Common myeloid progenitor, CD34-positive (primary cell): ENCODE measurements at regions of chr9 and their contacts with region 1.

Region 1: DNA sequence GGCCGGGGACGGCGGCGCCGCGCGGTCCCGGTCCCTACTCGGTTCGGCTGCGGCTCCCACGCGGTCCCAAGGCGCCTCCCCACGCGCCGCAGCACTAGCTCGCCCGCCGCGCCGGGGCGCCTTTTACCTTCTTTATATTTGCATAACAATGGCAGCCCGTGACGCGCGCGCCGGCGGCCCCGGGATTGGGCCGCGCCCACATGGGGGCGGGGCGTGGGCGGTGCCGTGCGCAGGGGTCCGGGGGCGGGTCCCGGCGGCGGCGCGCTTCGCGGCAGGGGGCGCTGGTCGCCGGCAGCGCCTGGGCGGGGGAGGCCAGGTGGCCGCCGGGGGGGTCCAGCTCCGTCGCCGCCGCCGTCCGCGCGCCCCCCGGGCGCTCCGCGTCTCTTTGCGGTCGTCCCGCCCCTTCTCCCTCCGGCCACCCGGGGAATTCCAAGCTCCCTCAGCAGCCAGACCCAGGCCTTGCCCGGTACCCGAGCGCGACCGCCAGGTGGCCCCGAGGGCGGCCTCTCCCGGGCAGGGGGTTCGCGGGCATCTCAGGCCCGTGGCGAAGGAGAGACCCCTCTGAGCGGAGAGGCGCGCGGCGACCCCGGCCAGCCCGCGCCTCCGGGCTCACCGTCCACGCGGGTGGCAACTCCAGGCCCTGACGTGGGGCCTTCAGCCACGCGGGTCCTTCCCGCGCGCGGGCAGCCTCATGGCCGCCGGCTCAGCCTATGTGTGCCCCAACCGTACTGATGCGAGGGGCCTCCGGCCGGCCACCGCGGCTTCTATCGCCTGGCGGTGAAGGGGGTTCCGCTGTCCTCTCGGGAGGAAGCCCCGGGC is at the start of gene NRARP:
- DNase-seq: peak; percentile 83 to 90 (median 89)
- H3K4me3 ChIP-seq: peak within 1 kb of the TSS; percentile 45 to 83 (median 66)
- H3K27ac ChIP-seq: peak within 1 kb of the TSS in 1 of 2 experiments; percentile 25
- H3K4me1 ChIP-seq: peaks cover 5 to 69% (median 66%) of the 10 kb centered on the region in 4 experiments
- H3K27me3 ChIP-seq: peaks cover 0 to 8% (median 2%) of the 10 kb centered on the region in 5 experiments

Region 2: GRCh38 chr9:137316012-137316976 is 13.9 kb after region 1 on chr9:
- CTCF ChIA-PET with region 1: interaction called, 56 read pairs
- POLR2A ChIA-PET with region 1: interaction called, 6 read pairs
- DNase-seq: peak in 2 of 3 donors; percentile 41 to 46
- H3K4me3 ChIP-seq: peak overlapping the region in 5 of 7 experiments; percentile 15 to 64 (median 36)
- H3K27ac ChIP-seq: no peak overlapping the region
- H3K4me1 ChIP-seq: peaks cover 0 to 45% (median 39%) of the 10 kb centered on the region in 4 experiments
- H3K27me3 ChIP-seq: no peaks in the 10 kb centered on the region

Region 3: GRCh38 chr9:137406876-137407589 is 104.6 kb after region 1 on chr9:
- CTCF ChIA-PET with region 1: interaction called, 24 read pairs
- POLR2A ChIA-PET with region 1: interaction called, 4 read pairs
- DNase-seq: peak; percentile 63 to 83 (median 80)
- H3K4me3 ChIP-seq: peak overlapping the region in 5 of 7 experiments; percentile 4 to 61 (median 48)
- H3K27ac ChIP-seq: no peak overlapping the region
- H3K4me1 ChIP-seq: peaks cover 0 to 39% (median 37%) of the 10 kb centered on the region in 4 experiments
- H3K27me3 ChIP-seq: no peaks in the 10 kb centered on the region

Region 4: GRCh38 chr9:137435980-137436760 is 133.8 kb after region 1 on chr9:
- CTCF ChIA-PET with region 1: no interaction called
- POLR2A ChIA-PET with region 1: no interaction called
- DNase-seq: peak in 2 of 3 donors; percentile 43 to 61
- H3K4me3 ChIP-seq: no peak overlapping the region
- H3K27ac ChIP-seq: no peak overlapping the region
- H3K4me1 ChIP-seq: peaks cover 0 to 35% (median 18%) of the 10 kb centered on the region in 4 experiments
- H3K27me3 ChIP-seq: no peaks in the 10 kb centered on the region

Region 5: GRCh38 chr9:137630679-137631078 is 328.3 kb after region 1 on chr9:
- CTCF ChIA-PET with region 1: no interaction called
- POLR2A ChIA-PET with region 1: no interaction called
- DNase-seq: peak in 1 of 3 donors; percentile 49
- H3K4me3 ChIP-seq: peak overlapping the region in 5 of 7 experiments; percentile 1 to 62 (median 30)
- H3K27ac ChIP-seq: peak overlapping the region in 1 of 2 experiments; percentile 44
- H3K4me1 ChIP-seq: peaks cover 19 to 69% (median 60%) of the 10 kb centered on the region in 4 experiments
- H3K27me3 ChIP-seq: no peaks in the 10 kb centered on the region